ENCODE measurements at regions of chr13 and their contacts with region 1.

Region 1: GRCh38 chr13:34372581-34372980 is 554.6 kb downstream of the RFC3 start:
- DNase-seq: no peak
- H3K4me3 ChIP-seq: no peak overlapping the region
- H3K27ac ChIP-seq: no peak overlapping the region
- H3K4me1 ChIP-seq: no peaks in the 10 kb centered on the region
- CTCF ChIP-seq: no peak

Region 2: DNA sequence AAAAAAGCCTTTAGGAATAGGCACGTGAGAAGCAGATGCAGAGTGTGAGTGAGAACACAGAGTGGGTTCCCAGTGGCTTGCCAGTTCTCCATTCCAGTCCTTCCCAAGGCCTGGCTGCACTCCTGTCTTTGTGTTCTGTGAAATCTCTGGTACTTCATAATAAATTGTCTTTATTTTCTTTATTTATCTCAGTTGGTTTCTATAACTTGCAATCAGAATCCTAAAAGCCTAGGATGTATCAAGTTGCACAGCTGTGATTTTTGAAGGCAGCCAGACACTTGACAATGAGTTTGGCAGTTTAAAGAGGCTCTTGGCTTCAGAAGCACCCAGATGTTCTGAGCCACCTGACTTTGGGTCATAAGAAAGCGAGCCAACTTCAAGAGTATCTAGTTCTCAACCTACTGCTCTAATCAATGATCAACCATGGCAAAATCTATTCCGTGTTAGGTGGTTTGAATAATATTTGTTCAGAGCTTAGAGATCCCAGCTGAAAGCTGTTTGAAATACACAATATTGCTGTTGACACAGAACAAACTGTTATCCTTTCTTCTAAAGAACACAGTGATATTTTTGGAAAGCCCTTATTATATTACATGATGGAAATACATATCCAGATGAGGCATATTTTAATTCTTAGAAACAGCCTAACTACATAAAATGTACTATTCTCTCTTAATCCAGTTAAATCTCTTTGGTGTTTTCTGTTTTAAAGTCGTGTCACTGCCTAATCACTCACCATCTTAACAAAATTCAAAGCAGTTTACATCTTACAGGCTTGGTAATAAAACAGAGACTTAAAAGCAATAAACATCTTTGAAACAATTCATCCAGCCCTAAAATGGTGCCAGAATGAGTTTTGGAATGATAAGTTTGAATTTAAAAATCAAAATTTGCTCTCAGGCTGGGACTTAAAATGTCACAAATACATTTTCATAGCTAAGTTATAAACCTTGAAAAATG is 86.5 kb after region 1 on chr13:
- CTCF ChIA-PET with region 1: no interaction called
- POLR2A ChIA-PET with region 1: no interaction called
- intact Hi-C with region 1: loop called (anchors 10 kb)
- DNase-seq: no peak
- H3K4me3 ChIP-seq: no peak overlapping the region
- H3K27ac ChIP-seq: no peak overlapping the region
- H3K4me1 ChIP-seq: no peaks in the 10 kb centered on the region
- CTCF ChIP-seq: no peak

Region 3: DNA sequence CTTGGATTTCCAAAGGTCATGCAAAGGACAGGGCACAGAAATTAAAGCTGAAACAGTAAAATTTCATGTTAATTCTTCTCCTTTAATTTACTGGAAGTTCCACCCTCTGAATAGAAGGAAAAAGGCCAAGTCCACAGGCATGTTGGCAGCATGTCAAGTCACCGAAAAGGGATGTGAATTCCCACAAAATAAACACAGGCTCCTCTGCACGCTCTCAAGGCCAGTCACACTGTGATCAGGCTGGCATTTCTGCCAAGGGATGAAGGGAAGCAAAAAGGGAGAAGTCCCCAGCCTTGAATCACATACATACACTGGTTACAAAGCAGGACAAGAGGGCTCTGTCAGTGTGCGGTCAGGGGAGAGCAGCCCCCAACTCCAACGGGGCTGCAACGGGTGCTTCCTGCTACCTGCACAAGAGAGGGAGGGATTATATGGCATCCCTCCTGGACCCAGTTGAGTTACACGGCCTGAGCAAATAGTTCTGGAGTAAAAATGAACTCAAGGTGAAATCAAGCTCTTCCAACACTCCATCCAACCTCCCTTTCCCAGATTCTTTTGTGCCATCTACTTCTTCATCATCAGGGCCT is 1751.7 kb after region 1 on chr13:
- CTCF ChIA-PET with region 1: no interaction called
- POLR2A ChIA-PET with region 1: no interaction called
- intact Hi-C with region 1: no loop called
- DNase-seq: no peak
- H3K4me3 ChIP-seq: no peak overlapping the region
- H3K27ac ChIP-seq: no peak overlapping the region
- H3K4me1 ChIP-seq: no peaks in the 10 kb centered on the region
- CTCF ChIP-seq: no peak

Measured in OCI-LY7 (cell line).